ENCODE measurements at regions of chr1 and their contacts with region 1.

Region 1: DNA sequence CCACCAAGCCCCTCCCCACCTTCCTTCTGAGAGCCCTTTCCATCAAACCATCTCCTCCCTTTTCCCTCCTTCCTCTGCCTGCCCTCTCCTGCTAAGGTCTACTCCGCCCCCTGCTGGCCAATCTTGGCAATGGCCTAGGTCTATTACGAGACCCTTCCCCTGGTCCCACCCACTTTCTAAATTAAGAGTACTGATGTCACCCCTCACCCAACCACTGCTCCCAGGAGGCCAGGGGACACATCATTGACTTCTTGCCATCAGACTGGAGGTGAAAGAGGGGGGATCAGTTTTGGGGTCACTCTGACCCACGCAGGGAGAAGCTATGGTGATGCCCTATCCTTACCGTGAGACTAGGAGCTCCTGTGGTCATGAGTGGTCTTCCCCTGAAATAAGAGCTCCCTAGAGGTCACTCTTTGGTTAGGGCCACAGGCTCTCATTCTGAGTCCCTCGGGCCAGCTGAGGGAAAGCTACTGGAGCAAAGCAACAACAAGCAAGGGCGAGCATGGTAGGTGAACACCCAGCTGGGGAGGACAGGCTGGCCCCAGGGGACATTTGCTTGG is 34.6 kb upstream of the S100A7 start:
- DNase-seq: peak; percentile 49 to 72 (median 58)
- H3K4me3 ChIP-seq: no peak overlapping the region
- H3K4me3 Mint-ChIP-seq: no peak overlapping the region
- H3K27ac ChIP-seq: no peak overlapping the region
- H3K27ac Mint-ChIP-seq: peak overlapping the region in 1 of 7 donors; percentile 54
- H3K4me1 ChIP-seq: no peaks in the 10 kb centered on the region
- H3K4me1 Mint-ChIP-seq: peaks cover 0 to 19% (median 0%) of the 10 kb centered on the region in 4 donors
- H3K27me3 ChIP-seq: peaks cover 8% of the 10 kb centered on the region
- H3K27me3 Mint-ChIP-seq: peaks cover 10 to 23% of the 10 kb centered on the region in 2 donors

Region 2: GRCh38 chr1:153277817-153278216 is 217.2 kb before region 1 on chr1:
- CTCF ChIA-PET with region 1: no interaction called
- POLR2A ChIA-PET with region 1: no interaction called
- intact Hi-C with region 1: no loop called
- DNase-seq: peak; percentile 25 to 48 (median 31)
- H3K4me3 ChIP-seq: no peak overlapping the region
- H3K4me3 Mint-ChIP-seq: no peak overlapping the region
- H3K27ac ChIP-seq: no peak overlapping the region
- H3K27ac Mint-ChIP-seq: no peak overlapping the region
- H3K4me1 ChIP-seq: no peaks in the 10 kb centered on the region
- H3K4me1 Mint-ChIP-seq: no peaks in the 10 kb centered on the region
- H3K27me3 ChIP-seq: no peaks in the 10 kb centered on the region
- H3K27me3 Mint-ChIP-seq: peaks cover 14 to 43% of the 10 kb centered on the region in 2 donors

Region 3: DNA sequence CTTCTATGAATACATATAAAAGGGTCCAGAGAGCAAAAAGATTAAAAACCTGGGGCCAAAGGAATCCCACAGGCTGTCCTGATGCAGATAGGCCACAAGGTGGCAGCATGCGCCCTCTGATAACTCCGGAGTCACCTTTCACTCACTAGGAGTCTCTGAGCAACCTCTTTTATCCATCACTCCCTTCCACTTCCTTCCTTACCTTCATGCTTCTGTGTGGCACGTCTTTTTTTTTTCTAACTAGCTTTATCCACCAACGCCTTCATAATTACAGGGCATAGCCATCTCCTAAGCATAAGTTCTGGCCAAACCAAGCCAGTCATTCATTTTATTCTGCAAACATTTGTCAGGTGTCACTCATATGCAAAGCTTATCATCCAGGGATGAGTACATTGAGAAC is 142.5 kb before region 1 on chr1:
- CTCF ChIA-PET with region 1: interaction called, 64 read pairs
- POLR2A ChIA-PET with region 1: no interaction called
- intact Hi-C with region 1: loop called (anchors 1 kb)
- DNase-seq: peak in 4 of 5 donors; percentile 48 to 63 (median 56)
- H3K4me3 ChIP-seq: no peak overlapping the region
- H3K4me3 Mint-ChIP-seq: no peak overlapping the region
- H3K27ac ChIP-seq: no peak overlapping the region
- H3K27ac Mint-ChIP-seq: no peak overlapping the region
- H3K4me1 ChIP-seq: peaks cover 8% of the 10 kb centered on the region
- H3K4me1 Mint-ChIP-seq: peaks cover 4 to 20% (median 11%) of the 10 kb centered on the region in 4 donors
- H3K27me3 ChIP-seq: no peaks in the 10 kb centered on the region
- H3K27me3 Mint-ChIP-seq: peaks cover 6 to 13% of the 10 kb centered on the region in 2 donors

Region 4: GRCh38 chr1:153465811-153466636 is 29.0 kb before region 1 on chr1:
- CTCF ChIA-PET with region 1: interaction called, 13 read pairs
- POLR2A ChIA-PET with region 1: no interaction called
- intact Hi-C with region 1: no loop called
- DNase-seq: peak; percentile 42 to 59 (median 50)
- H3K4me3 ChIP-seq: no peak overlapping the region
- H3K4me3 Mint-ChIP-seq: no peak overlapping the region
- H3K27ac ChIP-seq: no peak overlapping the region
- H3K27ac Mint-ChIP-seq: no peak overlapping the region
- H3K4me1 ChIP-seq: no peaks in the 10 kb centered on the region
- H3K4me1 Mint-ChIP-seq: no peaks in the 10 kb centered on the region
- H3K27me3 ChIP-seq: peaks cover 3% of the 10 kb centered on the region
- H3K27me3 Mint-ChIP-seq: peaks cover 8 to 28% of the 10 kb centered on the region in 2 donors